Lower leg skin (tissue), 4 donors: ENCODE measurements at regions of chr19 and their contacts with region 1.

Region 1: GRCh38 chr19:13277104-13277809 is 127.0 kb downstream of the IER2 start:
- DNase-seq: peak in 1 of 2 donors; percentile 60
- H3K4me3 ChIP-seq: no peak overlapping the region
- CTCF ChIP-seq: peak in 1 of 3 donors; percentile 68
- POLR2A ChIP-seq: no peak

Region 2: DNA sequence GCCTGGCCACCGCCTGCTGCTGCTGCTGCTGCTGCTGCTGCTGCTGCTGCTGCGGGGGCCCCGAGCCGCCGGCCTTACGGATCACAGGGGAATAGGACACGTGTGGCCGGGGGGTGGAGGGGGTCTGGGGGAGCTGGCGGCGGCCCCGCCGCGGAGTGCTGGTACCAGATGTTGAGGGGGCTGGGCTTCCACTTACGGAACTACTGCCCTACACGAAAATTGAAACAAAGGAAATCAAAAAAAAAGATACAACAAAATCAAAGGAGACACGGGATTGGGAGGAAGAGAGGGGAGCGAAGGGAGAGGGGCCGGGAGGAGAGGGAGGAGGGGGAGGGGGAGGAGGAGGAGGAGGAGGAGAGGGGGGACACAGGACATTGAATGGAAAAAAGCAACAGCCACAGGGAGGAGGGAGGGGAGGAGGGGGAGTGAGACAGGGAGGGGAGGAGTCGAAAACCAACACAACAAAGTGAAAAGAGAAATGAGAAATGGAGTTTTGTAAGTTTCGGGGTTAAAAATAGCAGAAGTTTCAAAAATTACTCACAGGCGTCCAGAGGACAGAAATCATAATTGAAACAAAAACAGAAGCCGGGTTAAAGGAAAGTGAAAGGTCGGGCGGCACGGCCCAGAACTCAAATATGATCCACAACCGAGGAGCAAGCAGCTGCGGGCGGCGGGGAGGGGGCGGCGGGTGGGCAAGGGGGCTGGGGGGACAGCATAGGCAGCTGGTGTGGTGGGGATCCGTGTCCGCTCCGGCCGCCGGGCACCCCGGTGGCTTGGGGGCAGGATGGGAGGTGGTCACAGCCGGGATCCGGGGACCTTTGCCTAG is 69.2 kb before region 1 on chr19:
- intact Hi-C with region 1: no loop called
- DNase-seq: peak in 1 of 2 donors; percentile 36
- H3K4me3 ChIP-seq: no peak overlapping the region
- CTCF ChIP-seq: no peak
- POLR2A ChIP-seq: no peak

Region 3: DNA sequence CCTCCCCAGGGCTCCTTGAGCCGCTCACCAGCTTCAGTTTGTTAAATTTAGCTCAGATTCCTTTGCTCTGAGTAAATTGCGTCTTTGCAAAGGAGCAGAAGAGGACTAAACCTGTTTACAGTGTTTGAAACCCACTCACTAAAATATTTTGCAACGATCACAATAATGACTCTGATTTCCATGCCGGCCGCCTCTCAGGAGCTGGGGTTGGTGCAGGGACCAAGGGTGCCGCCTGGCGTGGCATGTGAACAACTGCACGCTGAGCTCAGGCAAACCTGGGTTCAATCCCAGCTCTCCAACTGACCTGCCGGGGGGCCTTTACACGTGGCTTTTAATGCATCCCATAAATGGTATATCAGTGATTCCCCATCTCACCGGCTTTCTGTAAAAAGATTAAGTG is 297.7 kb after region 1 on chr19:
- intact Hi-C with region 1: loop called (anchors 5 kb)
- DNase-seq: no peak
- H3K4me3 ChIP-seq: no peak overlapping the region
- CTCF ChIP-seq: no peak
- POLR2A ChIP-seq: no peak